ENCODE measurements at regions of chr12 and their contacts with region 1.

Region 1: DNA sequence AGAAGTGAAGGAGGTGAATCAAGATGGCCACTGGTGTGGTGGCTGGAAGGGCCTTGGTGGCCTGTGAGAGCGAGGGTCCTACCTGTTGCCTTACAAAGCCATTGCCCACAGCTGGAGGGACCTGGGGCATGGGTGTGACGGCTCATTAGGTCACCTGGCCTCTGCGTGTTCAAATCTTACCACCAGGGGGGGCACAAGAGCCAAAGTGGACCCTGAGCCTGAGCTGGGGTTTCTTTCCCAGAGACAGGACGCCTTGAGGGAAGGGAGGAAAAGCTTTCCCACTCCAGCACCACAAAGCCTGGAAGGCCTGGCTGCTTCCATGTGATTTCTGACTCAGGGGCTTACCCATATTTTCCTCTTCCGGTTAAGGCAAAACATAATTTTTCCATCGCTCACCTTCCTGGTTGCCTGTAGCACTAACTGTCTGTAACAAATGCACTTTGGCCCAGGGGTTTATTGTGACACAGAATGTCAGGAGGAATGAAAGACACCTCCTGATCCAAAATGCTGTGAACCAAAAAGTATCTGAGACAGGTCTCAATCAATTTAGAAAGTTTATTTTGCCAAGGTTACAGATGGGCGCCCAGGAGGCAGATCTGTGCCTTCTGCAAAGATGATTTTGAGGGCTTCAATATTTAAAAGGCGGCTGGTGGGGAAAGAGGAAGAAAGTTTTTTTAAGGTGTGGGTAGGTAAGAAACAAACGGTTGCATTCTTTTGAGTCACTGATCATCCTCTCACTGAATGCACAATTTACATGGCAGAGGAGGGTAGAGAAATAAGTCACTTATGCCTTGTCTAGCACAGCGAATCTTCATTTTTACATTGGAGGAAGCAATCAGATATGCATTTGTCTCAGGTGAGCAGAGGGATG is 4.3 kb upstream of the CD9 start:
- DNase-seq: peak; percentile 91
- ATAC-seq: peak; percentile 77
- H3K4me3 ChIP-seq: no peak overlapping the region
- H3K27ac ChIP-seq: no peak overlapping the region
- H3K4me1 ChIP-seq: peaks cover 13% of the 10 kb centered on the region
- H3K27me3 ChIP-seq: no peaks in the 10 kb centered on the region; the same call in 1 of the 2 replicates
- CTCF ChIP-seq: peak; percentile 87
- POLR2A ChIP-seq: no peak
- RAD21 ChIP-seq: peak; percentile 89

Region 2: DNA sequence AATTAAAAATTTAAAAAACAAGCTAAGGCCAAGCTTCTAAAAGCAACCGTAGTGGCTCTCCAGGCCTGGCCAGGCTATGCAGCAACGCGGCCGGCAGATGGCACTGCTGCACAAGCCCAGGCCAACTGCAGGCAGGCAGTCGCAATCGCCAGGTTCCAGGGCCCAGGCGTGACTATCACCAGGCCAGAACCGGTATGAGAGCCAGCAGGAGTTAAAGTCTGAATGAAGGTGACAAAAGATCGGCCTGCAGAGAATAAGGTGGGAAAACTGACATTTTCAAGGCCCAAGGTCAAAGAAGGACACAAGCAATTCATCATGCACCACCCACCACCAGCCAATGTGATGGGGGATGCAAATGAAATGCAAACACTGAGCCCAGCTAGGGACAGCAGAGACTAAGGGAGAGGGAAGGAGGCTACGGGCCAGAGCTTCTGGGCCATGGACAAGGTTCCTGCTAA is 207.2 kb before region 1 on chr12:
- CTCF ChIA-PET with region 1: interaction called, 3 read pairs
- POLR2A ChIA-PET with region 1: no interaction called
- dilution Hi-C with region 1: no loop called
- in situ Hi-C with region 1: no loop called
- intact Hi-C with region 1: loop called (anchors 1 kb)
- DNase-seq: peak; percentile 71
- ATAC-seq: peak; percentile 100
- H3K4me3 ChIP-seq: no peak overlapping the region
- H3K27ac ChIP-seq: no peak overlapping the region
- H3K4me1 ChIP-seq: no peaks in the 10 kb centered on the region
- H3K27me3 ChIP-seq: peaks cover 13% of the 10 kb centered on the region
- CTCF ChIP-seq: peak; percentile 98
- POLR2A ChIP-seq: no peak; the same call in 1 of the 2 replicates
- RAD21 ChIP-seq: peak; percentile 99

Region 3: GRCh38 chr12:6182116-6182898 is 13.6 kb before region 1 on chr12:
- CTCF ChIA-PET with region 1: interaction called, 10 read pairs
- POLR2A ChIA-PET with region 1: no interaction called
- dilution Hi-C with region 1: no loop called
- in situ Hi-C with region 1: no loop called
- intact Hi-C with region 1: no loop called
- DNase-seq: peak; percentile 68
- ATAC-seq: peak; percentile 24
- H3K4me3 ChIP-seq: no peak overlapping the region
- H3K27ac ChIP-seq: peak overlapping the region; percentile 38
- H3K4me1 ChIP-seq: peaks cover 33% of the 10 kb centered on the region
- H3K27me3 ChIP-seq: no peaks in the 10 kb centered on the region
- CTCF ChIP-seq: no peak
- POLR2A ChIP-seq: no peak
- RAD21 ChIP-seq: no peak

Region 4: GRCh38 chr12:6278439-6279255 is 82.7 kb after region 1 on chr12:
- CTCF ChIA-PET with region 1: interaction called, 29 read pairs
- POLR2A ChIA-PET with region 1: no interaction called
- dilution Hi-C with region 1: no loop called
- in situ Hi-C with region 1: no loop called
- intact Hi-C with region 1: loop called (anchors 1 kb)
- DNase-seq: peak; percentile 74
- ATAC-seq: peak; percentile 81
- H3K4me3 ChIP-seq: peak overlapping the region; percentile 56
- H3K27ac ChIP-seq: peak overlapping the region; percentile 78
- H3K4me1 ChIP-seq: peaks cover 31% of the 10 kb centered on the region
- H3K27me3 ChIP-seq: no peaks in the 10 kb centered on the region
- CTCF ChIP-seq: peak; percentile 92
- POLR2A ChIP-seq: peak; percentile 50; the same call in 1 of the 2 replicates
- RAD21 ChIP-seq: peak; percentile 83

Region 5: DNA sequence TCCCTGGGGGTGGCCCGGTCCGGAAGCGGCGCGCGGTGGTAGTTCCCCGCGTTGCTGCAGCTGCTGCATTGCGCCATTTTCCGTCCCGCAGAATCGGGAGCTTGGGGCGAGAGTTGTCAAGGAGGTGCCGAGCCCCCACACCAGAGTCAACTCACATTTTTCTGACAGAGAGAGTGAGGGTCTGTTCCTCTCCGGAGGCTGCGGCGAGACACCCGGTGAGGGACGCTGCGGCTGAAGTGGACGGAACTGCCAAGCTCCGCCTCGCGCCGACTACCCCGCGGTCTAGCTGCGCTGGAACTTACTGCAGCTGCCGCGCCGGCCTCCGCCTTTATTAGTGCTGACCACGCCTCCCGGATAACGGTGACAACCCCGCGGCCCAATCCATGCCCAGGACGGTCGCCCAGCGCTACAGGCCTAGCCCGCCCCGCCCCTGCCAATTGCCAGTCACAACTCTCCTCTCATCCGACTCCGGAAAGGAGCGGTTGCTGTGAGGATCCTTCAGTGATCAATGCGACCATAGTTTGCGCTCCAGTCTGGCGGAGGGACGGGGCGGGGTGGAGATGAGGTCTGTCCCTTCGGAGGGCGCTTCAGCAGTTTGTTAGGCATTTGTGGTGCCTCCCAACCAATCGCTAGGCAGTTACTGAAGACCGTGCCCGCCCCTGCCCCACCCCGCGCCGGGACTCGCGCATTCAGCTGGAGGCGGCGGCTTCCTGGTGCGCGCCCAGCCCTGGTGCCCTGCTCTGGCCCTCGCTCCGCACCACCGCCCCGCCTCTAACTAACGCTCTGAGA is 274.7 kb after region 1 on chr12 and contains the start of gene VAMP1:
- CTCF ChIA-PET with region 1: no interaction called
- POLR2A ChIA-PET with region 1: no interaction called
- dilution Hi-C with region 1: no loop called
- in situ Hi-C with region 1: loop called (anchors 25 kb)
- intact Hi-C with region 1: loop called (anchors 5 kb)
- DNase-seq: peak; percentile 96
- ATAC-seq: peak; percentile 96
- H3K4me3 ChIP-seq: peak within 1 kb of the TSS; percentile 78
- H3K27ac ChIP-seq: peak within 1 kb of the TSS; percentile 89
- H3K4me1 ChIP-seq: peaks cover 4% of the 10 kb centered on the region
- H3K27me3 ChIP-seq: no peaks in the 10 kb centered on the region
- CTCF ChIP-seq: no peak
- POLR2A ChIP-seq: peak; percentile 99
- RAD21 ChIP-seq: no peak
- total RNA-seq, gene VAMP1: 7.2 and 7.5 TPM in 2 replicates